ENCODE measurements at regions of chr2 and their contacts with region 1.

Region 1: DNA sequence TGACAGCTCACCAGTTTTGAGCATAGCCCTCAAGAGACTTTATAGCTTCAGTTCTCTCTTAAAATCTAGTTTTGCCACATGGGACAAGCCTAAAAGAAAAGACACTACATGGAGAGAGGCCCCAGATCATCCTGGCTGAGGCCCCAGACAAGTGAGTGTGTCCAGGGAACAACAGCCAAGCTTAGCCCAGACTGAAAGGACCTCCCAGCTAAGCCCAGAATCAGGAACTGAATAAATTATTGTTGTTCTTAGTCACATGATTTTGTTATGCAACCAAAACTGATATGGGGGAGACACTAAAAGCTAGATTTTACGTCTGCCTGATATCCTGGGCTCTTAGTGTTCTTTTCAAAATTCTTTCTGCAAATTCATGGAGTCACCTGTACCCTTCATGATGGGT is 29.3 kb upstream of the LBH start:
- DNase-seq: peak; percentile 43
- ATAC-seq: peak; percentile 83 to 89

Region 2: GRCh38 chr2:29977284-29977683 is 224.7 kb before region 1 on chr2:
- intact Hi-C with region 1: no loop called
- DNase-seq: no peak
- ATAC-seq: no peak

Region 3: DNA sequence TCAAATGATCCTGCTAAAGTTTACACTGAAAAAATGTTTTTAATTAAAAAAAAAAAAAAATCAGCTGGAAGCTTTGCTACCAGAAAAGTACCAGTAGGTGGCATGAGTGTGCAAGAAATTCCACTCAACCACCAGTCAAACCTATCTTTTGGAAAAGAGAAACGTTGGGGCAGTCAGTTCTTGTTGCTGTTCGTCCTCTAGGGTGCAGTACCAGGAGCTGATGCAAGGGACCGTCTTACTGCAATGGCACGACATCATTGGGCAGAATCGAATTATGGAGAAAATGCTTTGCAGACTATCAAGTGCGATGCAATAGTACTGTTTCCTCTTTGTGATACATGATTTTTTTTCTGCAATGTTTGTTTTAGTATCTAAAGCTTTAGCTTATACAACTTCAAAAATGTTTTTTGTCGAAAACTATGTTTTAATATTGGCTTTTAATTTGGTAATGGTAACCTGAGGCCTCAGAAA is 36.9 kb before region 1 on chr2:
- intact Hi-C with region 1: loop called in 1 of 2 experiments (anchors 5 kb)
- DNase-seq: peak; percentile 40
- ATAC-seq: peak; percentile 88 to 96